Right ventricle myocardium inferior (tissue), 1 donor: ENCODE measurements at regions of chr15 and their contacts with region 1.

Region 1: DNA sequence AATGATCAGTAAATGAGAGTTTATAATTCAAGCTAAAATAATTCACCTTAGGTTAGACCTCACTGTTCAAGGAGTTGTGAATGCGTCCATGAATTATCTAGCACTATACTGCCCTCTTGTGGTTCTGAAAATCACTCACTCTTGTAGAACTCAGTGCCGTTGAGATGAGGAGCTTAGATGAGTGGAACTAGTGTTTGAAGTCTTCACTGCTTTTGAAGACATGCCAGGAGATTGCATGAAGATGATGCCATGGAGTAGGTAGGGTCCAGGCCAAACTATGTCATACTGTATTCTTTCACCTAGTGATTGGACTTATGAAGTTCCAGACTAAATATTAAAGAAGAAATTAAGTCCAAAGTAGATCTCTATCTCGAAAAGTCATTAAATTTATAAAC is 28.8 kb downstream of the LYSMD4 start:
- DNase-seq: no peak
- ATAC-seq: peak; percentile 83

Region 2: DNA sequence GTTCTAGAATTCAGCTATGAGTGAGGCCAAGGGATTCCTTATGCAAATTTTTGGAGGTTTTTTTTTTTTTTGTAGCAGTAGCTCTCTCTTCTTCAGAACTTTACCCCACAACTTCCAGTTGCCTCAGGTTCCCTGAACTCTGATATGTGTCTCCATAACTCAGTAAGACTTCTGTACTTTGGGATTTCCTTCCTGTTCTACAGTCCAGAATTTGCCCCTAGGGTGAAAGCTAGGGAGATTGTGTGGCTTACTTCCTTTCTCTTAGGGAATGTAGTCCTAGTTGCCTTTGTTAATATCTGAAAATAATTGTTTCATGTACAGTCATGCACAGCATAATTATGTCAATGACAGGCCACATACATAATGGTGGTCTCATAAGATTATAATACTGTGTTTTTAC is 422.3 kb before region 1 on chr15:
- intact Hi-C with region 1: loop called (anchors 2 kb)
- DNase-seq: no peak
- ATAC-seq: no peak

Region 3: DNA sequence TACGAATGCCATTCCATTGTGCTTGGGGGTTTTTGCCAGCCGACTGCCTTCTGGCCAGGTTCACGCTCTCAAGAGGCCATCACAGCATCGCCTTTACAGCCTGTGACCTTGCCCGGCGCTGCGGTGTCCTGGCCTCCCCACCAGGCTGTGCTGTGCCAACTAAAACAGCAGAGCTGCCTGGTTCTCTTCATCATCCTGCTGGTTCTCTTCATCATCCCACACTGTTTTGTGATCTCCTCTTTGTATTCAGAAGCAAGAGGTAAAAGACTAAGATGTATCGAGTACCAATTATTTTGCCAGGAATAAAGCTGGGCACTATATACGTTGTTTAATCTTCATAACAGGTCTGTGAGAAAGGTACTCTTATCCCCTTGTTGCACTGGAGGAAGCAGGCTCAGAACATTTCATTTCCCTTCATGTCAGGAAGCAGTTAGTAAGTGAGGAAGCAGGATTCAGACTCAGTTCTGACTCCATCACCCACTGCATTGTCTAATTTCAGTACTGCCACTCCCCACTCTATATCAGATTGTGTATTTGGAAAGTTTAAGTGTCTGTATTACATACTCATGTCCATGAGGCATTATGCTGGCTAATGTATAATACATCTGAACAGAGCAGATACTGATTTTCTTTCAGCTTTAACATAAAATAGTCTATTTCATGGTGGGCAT is 360.4 kb before region 1 on chr15:
- intact Hi-C with region 1: loop called (anchors 5 kb)
- DNase-seq: no peak
- ATAC-seq: peak; percentile 83

Region 4: DNA sequence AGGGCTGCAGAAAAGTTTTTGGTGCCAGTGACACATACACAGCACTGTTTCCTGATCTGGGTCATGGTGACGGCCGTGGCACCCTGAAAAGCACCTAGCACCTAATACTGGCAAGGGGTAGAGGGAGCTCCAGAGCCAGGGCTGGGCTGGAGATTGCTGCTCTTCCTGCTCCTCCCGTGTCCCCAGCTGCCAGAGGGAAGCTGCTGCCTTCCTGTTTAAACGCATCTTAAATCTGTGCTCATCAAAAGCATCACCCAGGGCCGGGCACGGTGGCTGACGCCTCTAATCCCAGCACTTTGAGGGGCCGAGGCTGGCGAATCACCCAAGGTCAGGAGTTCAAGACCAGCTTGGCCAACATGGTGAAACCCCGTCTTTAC is 295.4 kb before region 1 on chr15:
- intact Hi-C with region 1: loop called (anchors 2 kb)
- DNase-seq: no peak
- ATAC-seq: peak; percentile 86

Region 5: GRCh38 chr15:99452774-99453636 is 251.4 kb before region 1 on chr15:
- intact Hi-C with region 1: loop called (anchors 5 kb)
- DNase-seq: peak; percentile 95
- ATAC-seq: peak; percentile 30